Cardiac septum (tissue), 1 donor: ENCODE measurements at regions of chr15 and their contacts with region 1.

Region 1: DNA sequence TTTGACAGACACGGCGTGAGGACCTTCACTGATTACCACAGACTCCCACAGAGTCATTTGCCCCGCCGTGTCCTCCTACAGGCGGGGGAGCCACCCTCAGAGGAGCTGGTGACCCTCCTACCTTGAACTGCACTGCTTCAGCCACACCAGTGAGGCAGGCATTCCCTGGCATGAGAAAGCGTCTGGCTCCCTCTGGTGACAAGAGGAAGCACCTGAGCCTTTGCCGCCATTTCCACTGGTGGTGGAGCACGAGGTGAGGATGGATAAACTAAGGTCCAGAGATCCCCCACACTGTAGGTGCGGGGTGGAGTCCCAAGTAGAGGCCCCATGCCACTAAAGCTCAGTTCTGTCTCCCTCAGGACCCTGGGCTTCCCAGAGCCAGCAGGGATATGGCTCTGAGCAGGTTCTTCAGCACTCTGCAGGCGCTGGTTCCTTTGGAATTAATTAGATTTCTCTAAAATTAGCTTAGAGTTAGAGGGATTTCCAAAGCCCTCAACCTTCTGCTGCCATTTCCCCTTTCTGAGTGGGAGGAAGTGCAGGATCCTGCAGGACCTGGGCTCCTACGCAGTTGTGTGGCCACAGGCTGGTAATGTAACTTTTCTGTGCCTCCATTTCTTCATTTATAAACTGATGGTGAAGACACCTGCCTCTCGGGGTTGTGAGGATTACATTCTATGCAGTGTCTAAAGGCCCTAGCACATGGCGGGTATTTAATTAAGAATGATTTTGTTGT is 224.0 kb downstream of the SLCO3A1 start:
- DNase-seq: peak; percentile 89

Region 2: DNA sequence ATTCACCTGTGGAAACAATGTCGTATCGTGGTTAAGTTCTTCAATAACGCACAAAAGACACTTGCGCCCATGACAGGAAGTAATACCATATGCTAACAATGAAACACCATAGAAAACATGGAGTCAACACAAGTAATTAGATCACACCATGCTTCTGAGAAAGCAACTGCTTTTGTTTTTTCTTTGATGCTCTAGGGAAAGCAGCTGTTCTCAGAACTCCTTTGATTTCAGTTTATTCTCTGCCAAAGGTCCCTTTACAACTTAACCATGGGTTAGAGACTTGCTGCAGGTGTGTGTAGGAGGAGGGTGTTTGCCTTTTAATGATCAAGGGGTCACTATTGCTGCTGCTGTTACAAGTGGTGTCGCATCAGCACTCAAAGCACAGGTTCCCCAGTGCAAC is 548.0 kb before region 1 on chr15:
- intact Hi-C with region 1: loop called (anchors 5 kb)
- DNase-seq: no peak

Region 3: DNA sequence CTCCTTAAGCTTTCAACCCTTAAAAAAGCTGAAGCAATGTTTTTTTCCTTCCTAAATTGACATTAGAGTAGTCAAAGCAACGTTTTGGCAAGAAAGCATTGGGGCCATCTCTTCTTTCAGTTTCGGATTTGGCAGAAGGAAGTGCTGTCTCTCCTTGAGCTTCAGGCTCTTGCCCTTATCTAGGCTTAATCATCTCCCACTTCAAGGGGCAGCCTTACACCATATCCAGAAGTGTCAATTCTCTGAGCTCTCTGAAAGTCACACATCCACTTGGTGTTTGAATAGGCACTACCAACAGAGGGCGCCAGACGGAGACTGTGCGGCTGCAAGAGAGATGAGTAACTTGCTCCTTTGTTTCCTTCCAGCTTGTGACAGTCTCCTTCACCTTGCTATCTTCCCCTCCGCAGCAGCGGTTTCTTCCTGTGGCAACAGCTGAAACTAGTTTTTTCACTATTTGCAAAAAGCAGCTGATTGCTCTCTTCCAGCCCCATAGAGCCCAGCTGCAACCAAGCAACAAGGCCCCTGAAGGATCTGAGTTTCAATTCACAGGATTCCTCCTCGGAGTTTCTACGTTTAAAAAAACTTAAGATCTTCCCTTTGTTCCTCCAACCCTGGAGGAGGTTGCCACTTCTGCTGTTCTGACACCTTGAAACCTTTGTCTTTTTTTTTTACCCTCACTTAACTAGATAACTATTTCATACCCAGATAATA is 371.0 kb before region 1 on chr15:
- intact Hi-C with region 1: loop called (anchors 2 kb)
- DNase-seq: peak; percentile 91

Region 4: GRCh38 chr15:91942676-91943576 is 134.6 kb before region 1 on chr15:
- intact Hi-C with region 1: loop called (anchors 5 kb)
- DNase-seq: peak; percentile 87

Region 5: GRCh38 chr15:91965501-91966184 is 111.9 kb before region 1 on chr15:
- intact Hi-C with region 1: loop called (anchors 5 kb)
- DNase-seq: no peak

Region 6: GRCh38 chr15:92112180-92112579 is 34.7 kb after region 1 on chr15:
- intact Hi-C with region 1: no loop called
- DNase-seq: no peak